Dendritic cell treated with granulocyte-macrophage colony-stimulating factor and Interleukin-4, amounts not matched to agents 40 ng/mL and 50 ng/mL, for 4 days (primary cell): ENCODE measurements at regions of chr19 and their contacts with region 1.

Region 1: GRCh38 chr19:40777937-40778705 is at the start of gene RAB4B:
- H3K4me3 Mint-ChIP-seq: peak within 1 kb of the TSS; percentile 90
- H3K27ac Mint-ChIP-seq: peak within 1 kb of the TSS; percentile 99
- H3K4me1 Mint-ChIP-seq: peaks cover 68% of the 10 kb centered on the region
- H3K27me3 Mint-ChIP-seq: no peaks in the 10 kb centered on the region

Region 2: GRCh38 chr19:40716655-40717324 is 61.3 kb before region 1 on chr19 and contains the starts of genes COQ8B and ITPKC:
- intact Hi-C with region 1: loop called (anchors 10 kb)
- H3K4me3 Mint-ChIP-seq: peak within 1 kb of the TSS; percentile 88
- H3K27ac Mint-ChIP-seq: peak within 1 kb of the TSS; percentile 95
- H3K4me1 Mint-ChIP-seq: peaks cover 70% of the 10 kb centered on the region
- H3K27me3 Mint-ChIP-seq: no peaks in the 10 kb centered on the region

Region 3: DNA sequence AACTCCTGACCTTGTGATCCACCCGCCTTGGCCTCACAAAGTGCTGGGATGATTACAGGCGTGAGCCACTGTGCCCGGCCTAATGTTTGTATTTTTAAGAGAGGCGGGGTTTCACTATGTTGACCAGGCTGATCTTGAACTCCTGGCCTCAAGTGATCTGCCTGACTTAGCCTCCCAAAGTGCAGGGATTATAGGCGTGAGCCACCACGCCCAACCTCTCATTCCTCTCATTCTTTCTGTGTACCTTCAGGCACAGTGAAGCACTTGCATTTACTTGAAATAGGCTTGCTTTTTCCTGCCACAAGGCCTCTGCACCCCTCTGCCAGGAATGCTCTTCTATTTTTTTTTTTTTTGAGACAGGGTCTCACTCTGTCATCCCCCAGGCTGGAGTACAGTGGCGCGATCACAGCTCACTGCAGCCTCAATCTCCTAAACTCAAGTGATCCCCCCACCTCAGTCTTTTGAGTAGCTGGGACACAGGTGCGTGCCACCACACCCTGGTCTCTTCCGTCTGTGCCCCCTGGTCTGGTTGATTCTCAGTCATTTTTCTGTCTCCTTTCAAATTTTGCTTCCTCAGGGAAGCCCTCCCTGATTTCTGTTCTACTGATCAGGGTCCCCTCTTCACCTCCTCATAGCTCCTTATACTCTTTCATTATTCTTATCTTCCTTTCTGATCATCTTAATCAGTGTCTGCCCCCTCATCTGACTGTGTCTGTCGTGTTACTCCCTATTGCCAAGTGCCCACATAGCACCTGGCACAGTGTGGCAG is 42.9 kb before region 1 on chr19:
- intact Hi-C with region 1: no loop called
- H3K4me3 Mint-ChIP-seq: no peak overlapping the region
- H3K27ac Mint-ChIP-seq: no peak overlapping the region
- H3K4me1 Mint-ChIP-seq: no peaks in the 10 kb centered on the region
- H3K27me3 Mint-ChIP-seq: no peaks in the 10 kb centered on the region

Region 4: DNA sequence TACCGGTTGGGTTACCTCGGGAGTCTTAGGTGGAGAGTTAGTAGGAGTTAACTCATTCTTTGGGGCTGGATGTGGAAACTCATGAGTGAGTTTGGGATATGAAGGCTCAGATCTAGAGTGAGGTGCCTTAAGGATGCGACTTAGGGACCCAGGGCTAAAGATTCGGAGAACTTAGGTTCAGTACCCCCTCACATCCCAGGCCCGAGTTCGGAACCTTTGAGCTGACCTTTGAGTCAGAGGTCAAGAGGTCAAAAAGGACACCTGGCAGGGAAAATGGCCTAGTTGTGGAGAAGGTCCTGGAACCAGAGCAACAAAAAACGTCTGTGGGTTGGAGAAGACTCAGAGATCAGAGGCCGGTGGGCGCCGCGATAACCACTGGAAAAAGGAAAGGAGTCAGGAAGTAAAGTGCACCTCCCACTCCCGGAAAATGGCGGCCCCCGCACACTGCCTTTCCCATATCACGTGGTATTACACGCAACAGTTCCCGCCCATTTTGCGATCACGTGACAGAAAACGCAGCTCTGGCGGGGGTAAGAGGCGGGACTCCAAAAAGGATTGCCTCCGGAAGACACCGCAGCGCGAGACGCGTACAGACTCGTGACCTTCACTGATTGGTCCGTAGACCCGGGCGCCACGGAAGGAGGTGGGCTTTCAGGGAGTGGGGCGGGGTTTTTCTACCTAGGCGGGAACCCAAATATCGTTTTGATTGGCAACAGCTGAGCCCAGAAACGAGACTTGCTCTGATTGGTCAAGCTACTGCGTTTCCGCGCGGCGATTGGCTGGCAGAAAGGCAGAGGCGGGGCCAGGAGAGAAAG is 27.9 kb before region 1 on chr19 and contains the start of gene ACTMAP:
- intact Hi-C with region 1: loop called (anchors 1 kb)
- H3K4me3 Mint-ChIP-seq: peak within 1 kb of the TSS; percentile 96
- H3K27ac Mint-ChIP-seq: peak within 1 kb of the TSS; percentile 96
- H3K4me1 Mint-ChIP-seq: peaks cover 59% of the 10 kb centered on the region
- H3K27me3 Mint-ChIP-seq: no peaks in the 10 kb centered on the region

Region 5: DNA sequence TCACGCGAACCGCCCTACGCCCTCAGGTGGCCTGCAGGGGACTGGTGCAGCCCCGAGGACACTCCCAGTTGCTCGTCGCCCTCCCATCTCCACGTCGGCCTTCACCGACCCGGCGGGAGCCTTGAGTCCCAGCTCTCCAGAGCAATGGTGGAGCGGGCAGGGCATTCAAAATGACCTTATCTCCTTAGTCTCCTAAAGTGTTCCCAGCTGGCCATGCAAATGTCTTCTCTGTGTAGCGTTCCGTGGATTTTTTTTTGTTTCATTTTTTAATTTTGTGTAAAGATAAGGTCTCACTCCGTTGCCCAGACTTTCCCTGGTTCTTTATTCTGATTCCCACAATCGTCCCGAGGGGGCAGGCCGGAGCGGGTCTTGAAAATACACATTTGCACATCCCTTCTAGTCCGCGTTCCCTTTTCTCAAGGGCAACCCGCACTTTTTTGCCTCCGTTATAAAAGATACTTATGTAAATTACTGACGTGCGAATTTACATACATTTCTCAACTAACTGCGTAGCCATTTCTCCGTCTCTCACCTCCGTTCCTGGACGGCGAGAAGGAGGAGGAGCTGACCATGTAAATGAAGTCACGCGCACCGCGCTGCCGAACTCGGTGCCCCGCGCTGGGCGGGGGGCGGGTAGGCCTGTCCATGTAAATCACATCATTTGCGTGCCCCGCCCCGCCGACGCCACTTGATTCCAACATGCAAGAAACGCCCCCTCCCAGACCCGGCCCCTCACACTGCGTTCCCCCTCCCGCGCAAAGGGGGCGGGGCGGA is 20.3 kb after region 1 on chr19:
- intact Hi-C with region 1: loop called (anchors 1 kb)
- H3K4me3 Mint-ChIP-seq: peak overlapping the region; percentile 87
- H3K27ac Mint-ChIP-seq: peak overlapping the region; percentile 93
- H3K4me1 Mint-ChIP-seq: peaks cover 64% of the 10 kb centered on the region
- H3K27me3 Mint-ChIP-seq: no peaks in the 10 kb centered on the region

Region 6: DNA sequence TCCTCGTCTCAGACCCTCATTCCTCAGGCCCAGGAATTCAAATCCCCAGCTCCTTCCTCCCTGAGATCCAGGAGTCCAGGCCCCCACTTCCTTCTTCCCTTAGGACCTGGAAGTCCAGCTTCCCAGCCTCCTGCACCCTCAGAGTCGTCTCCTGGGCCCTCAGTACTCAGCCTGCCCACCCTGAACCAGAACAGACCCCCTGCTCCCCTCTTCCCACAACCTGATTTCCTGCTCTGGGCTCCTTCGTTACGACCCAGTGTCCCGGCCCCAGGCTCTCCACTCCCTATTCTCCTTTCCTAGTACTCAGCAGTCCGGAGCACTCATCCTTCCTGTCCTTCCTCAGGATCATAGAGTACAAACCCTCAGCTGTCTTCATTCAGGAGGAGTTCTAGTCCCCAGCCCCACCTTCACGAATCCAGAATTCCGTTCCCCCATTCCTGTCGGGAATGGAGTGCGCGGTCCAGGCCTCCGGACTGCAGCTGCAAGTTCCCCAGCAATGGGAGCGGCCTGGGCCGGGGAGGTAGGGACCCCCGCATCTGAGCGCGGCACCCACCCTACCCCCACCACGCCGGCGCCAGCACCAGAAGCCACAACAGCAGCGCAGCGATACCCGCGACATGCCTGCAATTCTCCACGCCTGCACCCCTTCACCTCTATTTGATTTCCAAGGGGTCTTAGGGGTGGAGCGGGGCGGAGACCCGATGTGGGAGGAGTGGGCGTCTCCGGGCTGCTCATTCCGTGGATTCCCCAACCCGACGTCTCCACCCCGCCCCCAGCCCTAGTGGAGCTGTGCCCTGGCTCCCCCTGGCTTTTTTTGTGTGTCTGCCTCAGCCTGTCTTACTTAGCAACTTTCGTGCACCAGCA is 33.6 kb after region 1 on chr19:
- intact Hi-C with region 1: no loop called
- H3K4me3 Mint-ChIP-seq: peak overlapping the region; percentile 85
- H3K27ac Mint-ChIP-seq: peak overlapping the region; percentile 87
- H3K4me1 Mint-ChIP-seq: peaks cover 62% of the 10 kb centered on the region
- H3K27me3 Mint-ChIP-seq: peaks cover 40% of the 10 kb centered on the region

Region 7: DNA sequence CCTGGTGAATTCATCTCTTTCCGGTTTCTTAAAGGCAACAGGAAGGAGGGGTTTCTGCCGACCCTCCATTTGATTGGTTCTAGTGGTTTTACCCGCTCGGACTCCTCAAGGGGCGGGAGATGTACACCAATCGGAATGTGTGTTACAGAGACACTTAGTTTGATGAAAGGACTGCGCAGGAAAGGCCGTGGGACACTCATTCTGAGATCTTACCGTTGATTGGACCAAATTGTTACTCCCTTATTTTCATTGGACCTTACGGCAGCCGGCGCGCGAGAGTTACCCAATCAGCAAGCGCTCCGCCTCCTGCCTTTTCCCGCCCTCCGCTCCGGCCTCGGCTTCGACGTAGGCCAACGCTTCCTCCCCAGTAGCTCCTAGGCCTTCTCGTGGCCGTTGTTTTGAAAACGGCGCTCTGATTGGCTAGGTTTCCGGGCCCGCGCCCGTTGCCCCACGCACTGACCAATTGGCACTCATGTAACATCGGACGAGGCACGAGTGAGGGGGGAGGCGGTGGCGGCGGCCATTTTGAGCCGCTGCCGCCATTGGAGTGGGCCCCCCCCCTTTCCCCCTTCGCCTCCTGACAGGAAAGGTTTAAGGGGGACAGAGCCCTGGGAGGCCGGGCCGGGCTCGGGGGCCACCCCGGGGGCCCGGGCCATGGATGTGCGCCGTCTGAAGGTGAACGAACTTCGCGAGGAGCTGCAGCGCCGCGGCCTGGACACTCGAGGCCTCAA is 485.9 kb after region 1 on chr19 and contains the start of gene HNRNPUL1:
- intact Hi-C with region 1: loop called (anchors 5 kb)
- H3K4me3 Mint-ChIP-seq: peak within 1 kb of the TSS; percentile 96
- H3K27ac Mint-ChIP-seq: peak within 1 kb of the TSS; percentile 99
- H3K4me1 Mint-ChIP-seq: peaks cover 48% of the 10 kb centered on the region
- H3K27me3 Mint-ChIP-seq: peaks cover 3% of the 10 kb centered on the region